Activated CD8-positive, alpha-beta memory T cell treated with anti-CD3 and anti-CD28 coated beads, Interleukin-2, amount 10 ng/mL, durations not matched to agents 7 days and 5 days (primary cell): ENCODE measurements at regions of chr18 and their contacts with region 1.

Region 1: GRCh38 chr18:36284671-36285295 is 12.7 kb upstream of the FHOD3 start:
- DNase-seq: peak; percentile 57
- ATAC-seq: no peak
- H3K4me3 Mint-ChIP-seq: no peak overlapping the region
- H3K27ac Mint-ChIP-seq: no peak overlapping the region
- H3K4me1 Mint-ChIP-seq: no peaks in the 10 kb centered on the region
- H3K27me3 Mint-ChIP-seq: peaks cover 50% of the 10 kb centered on the region

Region 2: GRCh38 chr18:36017232-36017631 is 267.6 kb before region 1 on chr18:
- CTCF ChIA-PET with region 1: interaction called, 27 read pairs
- DNase-seq: no peak
- ATAC-seq: no peak
- H3K4me3 Mint-ChIP-seq: no peak overlapping the region
- H3K27ac Mint-ChIP-seq: no peak overlapping the region
- H3K4me1 Mint-ChIP-seq: no peaks in the 10 kb centered on the region
- H3K27me3 Mint-ChIP-seq: no peaks in the 10 kb centered on the region

Region 3: GRCh38 chr18:36269157-36269556 is 15.6 kb before region 1 on chr18:
- CTCF ChIA-PET with region 1: no interaction called
- DNase-seq: no peak
- ATAC-seq: no peak
- H3K4me3 Mint-ChIP-seq: no peak overlapping the region
- H3K27ac Mint-ChIP-seq: no peak overlapping the region
- H3K4me1 Mint-ChIP-seq: no peaks in the 10 kb centered on the region
- H3K27me3 Mint-ChIP-seq: peaks cover 4% of the 10 kb centered on the region